ENCODE measurements at regions of chr14 and their contacts with region 1.

Region 1: GRCh38 chr14:34722717-34723545 is 8.5 kb upstream of the CFL2 start:
- DNase-seq: peak; percentile 56
- ATAC-seq: peak; percentile 77
- H3K4me3 Mint-ChIP-seq: no peak overlapping the region
- H3K27ac Mint-ChIP-seq: no peak overlapping the region
- H3K4me1 Mint-ChIP-seq: no peaks in the 10 kb centered on the region
- H3K27me3 Mint-ChIP-seq: peaks cover 2% of the 10 kb centered on the region
- CTCF ChIP-seq: peak; percentile 81

Region 2: GRCh38 chr14:34671716-34672115 is 51.2 kb before region 1 on chr14:
- CTCF ChIA-PET with region 1: interaction called, 105 read pairs
- POLR2A ChIA-PET with region 1: no interaction called
- intact Hi-C with region 1: loop called (anchors 1 kb)
- DNase-seq: no peak
- ATAC-seq: no peak
- H3K4me3 Mint-ChIP-seq: no peak overlapping the region
- H3K27ac Mint-ChIP-seq: no peak overlapping the region
- H3K4me1 Mint-ChIP-seq: no peaks in the 10 kb centered on the region
- H3K27me3 Mint-ChIP-seq: no peaks in the 10 kb centered on the region
- CTCF ChIP-seq: no peak

Region 3: GRCh38 chr14:34693228-34693939 is 29.5 kb before region 1 on chr14:
- CTCF ChIA-PET with region 1: interaction called, 17 read pairs
- POLR2A ChIA-PET with region 1: no interaction called
- intact Hi-C with region 1: no loop called
- DNase-seq: peak; percentile 38
- ATAC-seq: peak; percentile 56
- H3K4me3 Mint-ChIP-seq: no peak overlapping the region
- H3K27ac Mint-ChIP-seq: no peak overlapping the region
- H3K4me1 Mint-ChIP-seq: peaks cover 6% of the 10 kb centered on the region
- H3K27me3 Mint-ChIP-seq: no peaks in the 10 kb centered on the region
- CTCF ChIP-seq: no peak

Region 4: DNA sequence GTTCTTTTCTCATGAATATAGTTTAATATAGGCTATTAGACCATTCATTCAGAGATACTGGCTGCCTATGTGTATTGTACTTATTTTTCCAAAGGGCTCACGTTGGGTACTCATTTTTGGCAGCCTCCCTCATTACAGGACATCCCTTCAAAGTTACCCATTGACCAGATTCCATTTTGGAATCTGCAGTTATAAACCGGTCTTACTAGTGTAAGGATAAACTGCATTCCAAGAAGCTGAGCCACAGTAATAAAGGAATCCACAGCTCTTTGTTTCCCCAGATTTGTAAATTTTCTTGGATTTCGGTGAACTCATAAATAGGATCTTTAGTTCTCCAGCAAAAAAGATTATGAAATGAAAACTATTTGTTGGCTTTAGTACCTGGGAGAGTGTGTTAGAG is 10.3 kb after region 1 on chr14:
- CTCF ChIA-PET with region 1: interaction called, 41 read pairs
- POLR2A ChIA-PET with region 1: no interaction called
- intact Hi-C with region 1: no loop called
- DNase-seq: no peak
- ATAC-seq: no peak
- H3K4me3 Mint-ChIP-seq: no peak overlapping the region
- H3K27ac Mint-ChIP-seq: no peak overlapping the region
- H3K4me1 Mint-ChIP-seq: no peaks in the 10 kb centered on the region
- H3K27me3 Mint-ChIP-seq: no peaks in the 10 kb centered on the region
- CTCF ChIP-seq: no peak

Region 5: GRCh38 chr14:34749408-34749807 is 26.5 kb after region 1 on chr14:
- CTCF ChIA-PET with region 1: interaction called, 18 read pairs
- POLR2A ChIA-PET with region 1: no interaction called
- intact Hi-C with region 1: no loop called
- DNase-seq: no peak
- ATAC-seq: no peak
- H3K4me3 Mint-ChIP-seq: no peak overlapping the region
- H3K27ac Mint-ChIP-seq: no peak overlapping the region
- H3K4me1 Mint-ChIP-seq: no peaks in the 10 kb centered on the region
- H3K27me3 Mint-ChIP-seq: no peaks in the 10 kb centered on the region
- CTCF ChIP-seq: no peak

Region 6: GRCh38 chr14:34926552-34926951 is 203.6 kb after region 1 on chr14:
- CTCF ChIA-PET with region 1: no interaction called
- POLR2A ChIA-PET with region 1: no interaction called
- intact Hi-C with region 1: no loop called
- DNase-seq: no peak
- ATAC-seq: no peak
- H3K4me3 Mint-ChIP-seq: no peak overlapping the region
- H3K27ac Mint-ChIP-seq: no peak overlapping the region
- H3K4me1 Mint-ChIP-seq: peaks cover 25% of the 10 kb centered on the region
- H3K27me3 Mint-ChIP-seq: no peaks in the 10 kb centered on the region
- CTCF ChIP-seq: no peak

Region 7: GRCh38 chr14:34993426-34993825 is 270.5 kb after region 1 on chr14:
- CTCF ChIA-PET with region 1: no interaction called
- POLR2A ChIA-PET with region 1: no interaction called
- intact Hi-C with region 1: no loop called
- DNase-seq: no peak
- ATAC-seq: no peak
- H3K4me3 Mint-ChIP-seq: no peak overlapping the region
- H3K27ac Mint-ChIP-seq: no peak overlapping the region
- H3K4me1 Mint-ChIP-seq: peaks cover 37% of the 10 kb centered on the region
- H3K27me3 Mint-ChIP-seq: no peaks in the 10 kb centered on the region
- CTCF ChIP-seq: no peak

Measured in activated CD8-positive, alpha-beta T cell treated with anti-CD3 and anti-CD28 coated beads for 36 hours (primary cell).